Transverse colon (tissue), 4 donors: ENCODE measurements at regions of chr18 and their contacts with region 1.

Region 1: GRCh38 chr18:36296650-36297416 is 680 bp upstream of the FHOD3 start:
- DNase-seq: peak; percentile 36
- H3K4me3 ChIP-seq: peak overlapping the region; percentile 40 to 87 (median 53)
- H3K27ac ChIP-seq: peak overlapping the region; percentile 56 to 67 (median 60)
- H3K4me1 ChIP-seq: peaks cover 14 to 25% (median 22%) of the 10 kb centered on the region in 4 donors
- H3K27me3 ChIP-seq: peaks cover 63% of the 10 kb centered on the region
- CTCF ChIP-seq: peak in 3 of 5 experiments; percentile 2 to 24 (median 4)
- EP300 ChIP-seq: no peak
- POLR2A ChIP-seq: no peak

Region 2: DNA sequence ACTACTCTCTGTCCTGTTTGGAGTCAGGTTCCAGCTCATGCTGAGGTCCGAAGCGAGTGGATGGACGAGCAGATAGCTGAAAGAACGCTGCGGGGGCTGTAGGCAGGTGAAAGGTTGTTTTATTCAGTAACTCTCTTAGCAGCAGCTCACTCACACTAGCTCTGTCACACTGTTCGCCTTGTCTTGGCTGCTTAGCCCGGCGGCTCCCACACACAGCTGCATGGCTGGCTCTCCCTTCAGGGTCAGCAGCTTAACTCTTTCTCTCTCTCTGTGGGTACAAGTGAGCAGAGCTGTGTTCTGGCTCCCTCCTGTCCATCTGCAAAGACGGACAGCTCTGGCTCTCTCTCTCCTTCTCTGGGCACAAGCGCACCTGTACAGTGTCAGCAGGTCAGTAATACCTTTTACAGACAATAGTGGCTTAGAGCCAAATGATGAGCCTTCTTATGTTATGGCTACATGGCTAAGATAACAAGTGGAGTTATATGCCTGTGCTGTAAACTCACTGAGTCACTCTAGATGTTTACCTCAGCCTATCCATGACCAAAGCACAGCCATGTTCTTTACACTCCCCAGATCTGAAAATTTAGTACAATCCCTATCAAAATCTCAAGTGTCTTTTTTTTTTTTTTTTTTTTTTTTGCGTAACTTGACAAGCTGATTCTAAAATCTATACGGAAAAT is 566.0 kb before region 1 on chr18:
- in situ Hi-C with region 1: loop called in 1 of 4 experiments (anchors 25 kb)
- intact Hi-C with region 1: no loop called
- DNase-seq: no peak
- H3K4me3 ChIP-seq: no peak overlapping the region
- H3K27ac ChIP-seq: no peak overlapping the region
- H3K4me1 ChIP-seq: no peaks in the 10 kb centered on the region
- H3K27me3 ChIP-seq: no peaks in the 10 kb centered on the region
- CTCF ChIP-seq: no peak
- EP300 ChIP-seq: no peak
- POLR2A ChIP-seq: no peak

Region 3: DNA sequence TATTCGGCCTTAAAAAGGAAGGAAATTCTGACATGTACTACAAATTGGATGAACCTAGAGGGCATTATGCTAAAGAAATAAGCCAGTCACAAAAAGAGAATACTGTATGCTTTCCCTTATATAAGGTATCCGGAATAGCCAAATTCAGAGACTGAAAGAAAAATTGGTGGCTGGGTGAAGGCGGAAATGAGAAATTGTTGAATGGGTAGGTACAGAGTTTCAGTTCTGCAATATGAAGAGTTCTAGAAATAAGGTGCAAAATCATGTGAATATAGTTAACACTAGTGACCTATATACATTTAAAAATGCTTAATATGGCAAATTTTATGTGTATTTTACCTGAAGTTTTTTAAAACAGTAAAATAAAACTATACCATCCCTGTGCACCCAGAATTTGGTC is 281.2 kb before region 1 on chr18:
- in situ Hi-C with region 1: loop called in 1 of 4 experiments (anchors 25 kb)
- intact Hi-C with region 1: no loop called
- DNase-seq: no peak
- H3K4me3 ChIP-seq: no peak overlapping the region
- H3K27ac ChIP-seq: no peak overlapping the region
- H3K4me1 ChIP-seq: no peaks in the 10 kb centered on the region
- H3K27me3 ChIP-seq: no peaks in the 10 kb centered on the region
- CTCF ChIP-seq: no peak
- EP300 ChIP-seq: no peak
- POLR2A ChIP-seq: no peak

Region 4: GRCh38 chr18:36389811-36390581 is 93.2 kb after region 1 on chr18:
- in situ Hi-C with region 1: no loop called
- intact Hi-C with region 1: no loop called
- DNase-seq: no peak
- H3K4me3 ChIP-seq: no peak overlapping the region
- H3K27ac ChIP-seq: no peak overlapping the region
- H3K4me1 ChIP-seq: no peaks in the 10 kb centered on the region
- H3K27me3 ChIP-seq: no peaks in the 10 kb centered on the region
- CTCF ChIP-seq: no peak
- EP300 ChIP-seq: no peak
- POLR2A ChIP-seq: no peak